Calu3 (cell line): ENCODE measurements at regions of chr1 and their contacts with region 1.

Region 1: GRCh38 chr1:81978945-81979344 is 178.2 kb downstream of the ADGRL2 start:
- DNase-seq: no peak
- H3K4me3 Mint-ChIP-seq: no peak overlapping the region
- H3K27ac Mint-ChIP-seq: peak overlapping the region; percentile 12
- H3K4me1 Mint-ChIP-seq: no peaks in the 10 kb centered on the region
- H3K27me3 Mint-ChIP-seq: no peaks in the 10 kb centered on the region
- CTCF ChIP-seq: no peak

Region 2: GRCh38 chr1:81808760-81809159 is 170.2 kb before region 1 on chr1:
- CTCF ChIA-PET with region 1: no interaction called
- intact Hi-C with region 1: loop called (anchors 5 kb)
- DNase-seq: peak; percentile 11
- H3K4me3 Mint-ChIP-seq: peak overlapping the region; percentile 57
- H3K27ac Mint-ChIP-seq: peak overlapping the region; percentile 75
- H3K4me1 Mint-ChIP-seq: peaks cover 33% of the 10 kb centered on the region
- H3K27me3 Mint-ChIP-seq: no peaks in the 10 kb centered on the region
- CTCF ChIP-seq: no peak

Region 3: DNA sequence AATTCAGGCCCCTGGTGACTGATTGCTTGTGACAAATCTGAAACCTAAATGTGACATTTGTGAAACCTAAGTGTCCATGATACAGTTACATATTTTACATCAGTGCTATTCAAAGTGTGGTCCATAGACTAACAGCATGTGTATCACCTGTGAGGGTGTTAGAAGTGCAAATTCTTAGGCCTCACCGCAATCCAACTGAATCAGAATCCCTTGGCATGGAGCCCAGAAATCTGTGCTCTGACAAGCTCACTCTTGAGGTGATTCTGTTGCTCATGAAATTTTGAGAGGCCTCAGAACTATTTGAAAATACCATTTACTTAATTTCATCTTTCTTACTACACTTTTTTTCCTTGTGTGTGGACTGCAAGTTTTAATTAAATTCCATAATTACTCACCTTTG is 409.7 kb after region 1 on chr1:
- CTCF ChIA-PET with region 1: no interaction called
- intact Hi-C with region 1: no loop called
- DNase-seq: peak; percentile 35
- H3K4me3 Mint-ChIP-seq: no peak overlapping the region
- H3K27ac Mint-ChIP-seq: no peak overlapping the region
- H3K4me1 Mint-ChIP-seq: no peaks in the 10 kb centered on the region
- H3K27me3 Mint-ChIP-seq: no peaks in the 10 kb centered on the region
- CTCF ChIP-seq: no peak